Activated CD4-positive, alpha-beta memory T cell treated with anti-CD3 and anti-CD28 coated beads, Interleukin-2, amount 10 ng/mL, durations not matched to agents 7 days and 5 days (primary cell): ENCODE measurements at regions of chr5 and their contacts with region 1.

Region 1: GRCh38 chr5:132526290-132526973 is 16.9 kb downstream of the IL5 start:
- DNase-seq: peak; percentile 34
- H3K4me3 Mint-ChIP-seq: no peak overlapping the region
- H3K27ac Mint-ChIP-seq: no peak overlapping the region
- H3K4me1 Mint-ChIP-seq: peaks cover 55% of the 10 kb centered on the region
- H3K27me3 Mint-ChIP-seq: peaks cover 2% of the 10 kb centered on the region

Region 2: GRCh38 chr5:132142459-132142858 is 384.0 kb before region 1 on chr5:
- CTCF ChIA-PET with region 1: no interaction called
- POLR2A ChIA-PET with region 1: no interaction called
- DNase-seq: no peak
- H3K4me3 Mint-ChIP-seq: no peak overlapping the region
- H3K27ac Mint-ChIP-seq: no peak overlapping the region
- H3K4me1 Mint-ChIP-seq: no peaks in the 10 kb centered on the region
- H3K27me3 Mint-ChIP-seq: peaks cover 40% of the 10 kb centered on the region

Region 3: GRCh38 chr5:132386644-132387286 is 139.7 kb before region 1 on chr5:
- CTCF ChIA-PET with region 1: interaction called, 10 read pairs
- POLR2A ChIA-PET with region 1: interaction called, 3 read pairs
- DNase-seq: peak; percentile 83
- H3K4me3 Mint-ChIP-seq: no peak overlapping the region
- H3K27ac Mint-ChIP-seq: peak overlapping the region; percentile 31
- H3K4me1 Mint-ChIP-seq: peaks cover 52% of the 10 kb centered on the region
- H3K27me3 Mint-ChIP-seq: no peaks in the 10 kb centered on the region

Region 4: GRCh38 chr5:132446669-132447068 is 79.8 kb before region 1 on chr5:
- CTCF ChIA-PET with region 1: no interaction called
- POLR2A ChIA-PET with region 1: no interaction called
- DNase-seq: no peak
- H3K4me3 Mint-ChIP-seq: no peak overlapping the region
- H3K27ac Mint-ChIP-seq: no peak overlapping the region
- H3K4me1 Mint-ChIP-seq: peaks cover 60% of the 10 kb centered on the region
- H3K27me3 Mint-ChIP-seq: no peaks in the 10 kb centered on the region

Region 5: DNA sequence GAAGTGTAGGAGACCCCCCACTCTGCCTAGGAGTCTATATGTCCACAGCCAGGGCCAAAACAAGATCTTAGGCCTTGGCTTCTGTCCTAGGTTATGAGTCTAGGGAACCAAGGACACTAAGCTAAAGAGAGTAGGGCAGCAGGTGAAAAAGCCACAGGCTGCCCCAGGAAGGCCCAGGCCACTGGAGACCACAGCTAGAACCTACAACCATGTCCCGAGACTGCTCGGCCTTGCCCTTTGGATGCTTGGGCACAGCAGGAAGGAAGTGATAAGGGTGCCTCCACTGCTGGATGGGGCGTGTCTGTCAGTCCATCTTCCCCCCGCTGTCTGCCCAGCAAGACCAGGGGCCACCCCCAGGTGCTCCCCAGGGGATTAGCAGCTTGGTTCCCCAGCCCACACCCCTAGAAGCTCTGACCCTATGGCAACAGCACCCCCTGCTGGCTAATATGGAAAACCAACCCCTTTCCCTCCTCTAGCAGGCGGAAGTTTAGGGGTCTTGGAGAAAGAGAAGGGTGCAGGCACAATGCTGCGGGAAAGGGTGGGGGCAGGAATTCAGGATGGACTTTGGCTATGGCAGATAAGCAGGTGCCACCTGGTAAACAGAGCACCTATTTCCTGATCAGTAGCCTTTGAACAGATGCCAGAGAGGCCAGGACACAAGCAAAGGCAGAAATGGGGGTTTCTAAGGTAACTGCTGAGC is 25.4 kb before region 1 on chr5:
- CTCF ChIA-PET with region 1: interaction called, 11 read pairs
- POLR2A ChIA-PET with region 1: interaction called, 3 read pairs
- DNase-seq: peak; percentile 78
- H3K4me3 Mint-ChIP-seq: no peak overlapping the region
- H3K27ac Mint-ChIP-seq: no peak overlapping the region
- H3K4me1 Mint-ChIP-seq: peaks cover 39% of the 10 kb centered on the region
- H3K27me3 Mint-ChIP-seq: peaks cover 3% of the 10 kb centered on the region

Region 6: GRCh38 chr5:132549576-132549975 is 23.1 kb after region 1 on chr5:
- CTCF ChIA-PET with region 1: interaction called, 11 read pairs
- POLR2A ChIA-PET with region 1: interaction called, 3 read pairs
- DNase-seq: no peak
- H3K4me3 Mint-ChIP-seq: no peak overlapping the region
- H3K27ac Mint-ChIP-seq: no peak overlapping the region
- H3K4me1 Mint-ChIP-seq: peaks cover 36% of the 10 kb centered on the region
- H3K27me3 Mint-ChIP-seq: peaks cover 4% of the 10 kb centered on the region

Region 7: GRCh38 chr5:132714456-132715307 is 188.2 kb after region 1 on chr5:
- CTCF ChIA-PET with region 1: interaction called, 18 read pairs
- POLR2A ChIA-PET with region 1: no interaction called
- DNase-seq: no peak
- H3K4me3 Mint-ChIP-seq: peak overlapping the region; percentile 19
- H3K27ac Mint-ChIP-seq: peak overlapping the region; percentile 42
- H3K4me1 Mint-ChIP-seq: peaks cover 21% of the 10 kb centered on the region
- H3K27me3 Mint-ChIP-seq: no peaks in the 10 kb centered on the region